OCI-LY7 (cell line): ENCODE measurements at regions of chr12 and their contacts with region 1.

Region 1: DNA sequence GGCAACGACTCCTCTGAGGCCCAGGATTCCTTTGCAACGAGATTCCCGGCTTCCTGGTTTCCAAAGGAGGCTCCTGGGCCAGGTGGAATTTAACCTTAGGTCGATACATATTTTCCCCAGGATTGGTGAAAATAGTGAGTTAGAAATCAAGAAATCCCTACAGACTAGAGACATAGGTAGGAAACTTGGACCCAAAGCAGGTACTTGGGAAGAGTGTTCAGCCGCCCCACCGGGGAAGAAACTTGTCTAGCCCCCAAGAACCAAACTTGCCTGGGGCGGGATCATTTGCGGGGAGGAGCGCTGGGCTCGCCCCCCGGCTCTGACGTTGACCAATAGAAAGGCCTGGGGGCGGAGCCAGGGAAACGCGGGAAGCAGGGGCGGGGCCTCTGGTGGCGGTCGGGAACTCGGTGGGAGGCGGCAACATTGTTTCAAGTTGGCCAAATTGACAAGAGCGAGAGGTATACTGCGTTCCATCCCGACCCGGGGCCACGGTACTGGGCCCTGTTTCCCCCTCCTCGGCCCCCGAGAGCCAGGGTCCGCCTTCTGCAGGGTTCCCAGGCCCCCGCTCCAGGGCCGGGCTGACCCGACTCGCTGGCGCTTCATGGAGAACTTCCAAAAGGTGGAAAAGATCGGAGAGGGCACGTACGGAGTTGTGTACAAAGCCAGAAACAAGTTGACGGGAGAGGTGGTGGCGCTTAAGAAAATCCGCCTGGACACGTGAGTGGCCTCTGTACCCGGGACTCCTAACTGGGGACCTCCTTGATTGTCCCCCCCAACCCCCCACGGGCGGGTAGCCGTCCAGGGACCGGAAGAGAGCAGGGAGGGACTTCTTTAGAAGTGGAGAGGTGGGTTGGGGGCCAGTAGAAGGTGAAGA is at the start of gene CDK2:
- DNase-seq: peak; percentile 93
- H3K4me3 ChIP-seq: peak within 1 kb of the TSS; percentile 91
- H3K27ac ChIP-seq: peak within 1 kb of the TSS; percentile 37
- H3K4me1 ChIP-seq: peaks cover 29% of the 10 kb centered on the region
- CTCF ChIP-seq: no peak
- total RNA-seq, gene CDK2: 57.8 and 68.1 TPM in 2 replicates

Region 2: GRCh38 chr12:55797068-55797467 is 169.6 kb before region 1 on chr12:
- CTCF ChIA-PET with region 1: no interaction called
- POLR2A ChIA-PET with region 1: no interaction called
- intact Hi-C with region 1: no loop called
- DNase-seq: peak; percentile 57
- H3K4me3 ChIP-seq: no peak overlapping the region
- H3K27ac ChIP-seq: no peak overlapping the region
- H3K4me1 ChIP-seq: no peaks in the 10 kb centered on the region
- CTCF ChIP-seq: peak; percentile 80

Region 3: GRCh38 chr12:55842681-55843429 is 123.8 kb before region 1 on chr12 and contains the start of gene MMP19:
- CTCF ChIA-PET with region 1: no interaction called
- POLR2A ChIA-PET with region 1: no interaction called
- intact Hi-C with region 1: no loop called
- DNase-seq: no peak
- H3K4me3 ChIP-seq: no peak within 1 kb of the TSS
- H3K27ac ChIP-seq: no peak within 1 kb of the TSS
- H3K4me1 ChIP-seq: no peaks in the 10 kb centered on the region
- CTCF ChIP-seq: no peak
- total RNA-seq, gene MMP19: not detected in 2 replicates

Region 4: DNA sequence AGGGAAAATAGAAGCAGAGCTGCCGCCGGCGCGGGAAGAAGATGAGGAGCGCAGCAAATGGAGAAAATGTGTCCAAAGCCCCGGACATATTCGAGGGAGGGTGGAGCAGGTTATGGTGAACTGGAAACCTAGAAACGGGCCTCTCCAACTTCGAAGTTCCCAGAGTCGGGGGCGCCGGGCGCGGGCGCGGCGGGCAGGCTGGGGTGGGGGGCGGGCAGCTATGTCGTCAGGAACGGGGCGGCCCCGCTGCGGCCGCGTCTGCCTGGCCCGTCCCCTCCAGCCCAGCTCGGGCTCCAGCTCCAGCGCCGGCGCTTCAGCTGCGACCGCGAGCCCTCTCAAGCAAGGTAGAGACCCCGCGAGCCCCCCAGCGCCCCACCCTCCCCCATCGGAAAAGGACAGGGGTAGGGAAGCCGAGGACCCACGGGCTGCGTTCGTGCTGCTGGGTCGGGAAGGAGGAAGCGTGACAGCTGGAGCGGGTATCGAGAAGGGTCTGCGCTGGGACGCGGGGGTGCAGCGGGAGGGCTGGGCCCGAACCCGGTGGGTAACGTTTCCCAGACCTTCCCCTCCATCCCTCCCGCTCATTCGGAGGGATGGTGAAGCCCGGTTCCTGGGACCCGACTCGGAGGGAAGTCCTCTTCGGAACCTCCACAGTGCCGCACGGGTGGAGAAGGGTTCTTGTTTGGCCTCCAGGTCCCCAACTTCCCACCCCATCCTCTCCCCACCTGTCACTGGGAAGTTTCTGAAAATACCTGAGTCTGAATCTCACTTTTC is 34.7 kb before region 1 on chr12:
- CTCF ChIA-PET with region 1: no interaction called
- POLR2A ChIA-PET with region 1: interaction called, 5 read pairs
- intact Hi-C with region 1: loop called (anchors 2 kb)
- DNase-seq: peak; percentile 48
- H3K4me3 ChIP-seq: peak overlapping the region; percentile 78
- H3K27ac ChIP-seq: peak overlapping the region; percentile 99
- H3K4me1 ChIP-seq: peaks cover 49% of the 10 kb centered on the region
- CTCF ChIP-seq: no peak

Region 5: GRCh38 chr12:55946553-55946952 is 20.1 kb before region 1 on chr12:
- CTCF ChIA-PET with region 1: no interaction called
- POLR2A ChIA-PET with region 1: interaction called, 10 read pairs
- intact Hi-C with region 1: no loop called
- DNase-seq: no peak
- H3K4me3 ChIP-seq: no peak overlapping the region
- H3K27ac ChIP-seq: no peak overlapping the region
- H3K4me1 ChIP-seq: no peaks in the 10 kb centered on the region
- CTCF ChIP-seq: no peak

Region 6: DNA sequence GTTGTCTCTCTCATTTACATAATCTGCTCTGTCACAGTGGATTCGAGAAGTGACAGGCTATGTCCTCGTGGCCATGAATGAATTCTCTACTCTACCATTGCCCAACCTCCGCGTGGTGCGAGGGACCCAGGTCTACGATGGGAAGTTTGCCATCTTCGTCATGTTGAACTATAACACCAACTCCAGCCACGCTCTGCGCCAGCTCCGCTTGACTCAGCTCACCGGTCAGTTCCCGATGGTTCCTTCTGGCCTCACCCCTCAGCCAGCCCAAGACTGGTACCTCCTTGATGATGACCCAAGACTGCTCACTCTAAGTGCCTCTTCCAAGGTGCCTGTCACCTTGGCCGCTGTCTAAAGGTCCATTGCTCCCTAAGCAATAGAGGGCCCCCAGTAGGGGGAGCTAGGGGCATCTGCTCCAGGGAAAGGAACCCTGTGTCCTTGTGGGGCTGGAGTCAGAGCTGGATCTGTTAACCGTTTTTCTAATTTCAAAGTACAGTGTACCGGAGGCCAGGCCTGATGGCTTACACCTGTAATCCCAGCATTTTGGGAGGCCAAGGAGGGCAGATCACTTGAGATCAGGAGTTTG is 118.4 kb after region 1 on chr12:
- CTCF ChIA-PET with region 1: interaction called, 11 read pairs
- POLR2A ChIA-PET with region 1: no interaction called
- intact Hi-C with region 1: no loop called
- DNase-seq: peak; percentile 49
- H3K4me3 ChIP-seq: no peak overlapping the region
- H3K27ac ChIP-seq: no peak overlapping the region
- H3K4me1 ChIP-seq: peaks cover 8% of the 10 kb centered on the region
- CTCF ChIP-seq: peak; percentile 73